ENCODE measurements at regions of chr21 and their contacts with region 1.

Region 1: GRCh38 chr21:16082038-16082816 is 352.4 kb downstream of the USP25 start:
- DNase-seq: peak; percentile 17
- H3K4me3 Mint-ChIP-seq: no peak overlapping the region
- H3K27ac Mint-ChIP-seq: no peak overlapping the region
- H3K4me1 Mint-ChIP-seq: peaks cover 7% of the 10 kb centered on the region
- H3K27me3 Mint-ChIP-seq: peaks cover 11% of the 10 kb centered on the region
- CTCF ChIP-seq: peak; percentile 29

Region 2: DNA sequence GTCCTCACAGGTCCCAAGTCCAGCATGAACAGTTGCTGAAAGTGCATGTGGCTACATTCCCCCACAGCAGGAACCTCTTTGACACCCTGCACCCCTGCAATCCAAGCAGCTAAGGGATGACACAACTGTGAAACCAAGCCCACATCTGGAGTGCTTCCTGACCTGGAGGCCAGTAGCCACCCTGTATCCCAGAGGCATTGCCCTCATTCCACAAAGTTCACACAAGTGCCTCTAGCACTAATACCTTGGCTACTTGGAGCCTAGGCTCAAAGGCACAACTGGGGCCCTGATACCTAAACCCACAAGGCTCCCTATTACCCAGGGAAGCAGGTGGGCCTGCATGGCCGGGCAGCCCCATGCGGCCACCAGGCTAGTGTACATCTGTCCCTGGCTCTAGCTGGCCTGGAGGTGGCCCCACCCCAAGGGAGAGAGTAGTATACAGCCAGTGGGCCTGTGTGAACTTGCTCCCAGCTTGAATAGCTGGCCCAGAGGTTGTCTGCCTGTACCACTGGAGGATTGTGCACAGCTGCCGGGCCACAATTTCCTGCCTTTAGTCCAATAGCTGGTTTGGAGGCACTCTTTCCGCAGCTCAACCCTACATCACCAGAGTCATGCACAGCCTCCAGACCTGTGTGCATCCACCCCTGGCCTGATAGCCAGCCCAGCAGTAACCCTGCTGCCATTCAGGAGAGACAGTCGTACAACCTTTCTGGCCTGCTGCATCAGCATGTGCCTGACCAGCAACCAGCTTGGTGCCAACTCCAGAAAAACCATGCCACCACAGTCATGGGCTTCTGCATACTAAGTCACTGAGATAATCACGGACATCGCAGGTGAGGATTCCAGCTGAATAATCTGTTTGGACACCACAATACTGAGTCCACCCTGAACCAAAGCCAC is 300.2 kb before region 1 on chr21:
- CTCF ChIA-PET with region 1: no interaction called
- POLR2A ChIA-PET with region 1: no interaction called
- intact Hi-C with region 1: no loop called
- DNase-seq: no peak
- H3K4me3 Mint-ChIP-seq: no peak overlapping the region
- H3K27ac Mint-ChIP-seq: no peak overlapping the region
- H3K4me1 Mint-ChIP-seq: peaks cover 12% of the 10 kb centered on the region
- H3K27me3 Mint-ChIP-seq: no peaks in the 10 kb centered on the region
- CTCF ChIP-seq: no peak

Region 3: GRCh38 chr21:16096988-16097387 is 14.8 kb after region 1 on chr21:
- CTCF ChIA-PET with region 1: interaction called, 19 read pairs
- POLR2A ChIA-PET with region 1: no interaction called
- intact Hi-C with region 1: no loop called
- DNase-seq: no peak
- H3K4me3 Mint-ChIP-seq: no peak overlapping the region
- H3K27ac Mint-ChIP-seq: no peak overlapping the region
- H3K4me1 Mint-ChIP-seq: no peaks in the 10 kb centered on the region
- H3K27me3 Mint-ChIP-seq: peaks cover 42% of the 10 kb centered on the region
- CTCF ChIP-seq: no peak

Region 4: DNA sequence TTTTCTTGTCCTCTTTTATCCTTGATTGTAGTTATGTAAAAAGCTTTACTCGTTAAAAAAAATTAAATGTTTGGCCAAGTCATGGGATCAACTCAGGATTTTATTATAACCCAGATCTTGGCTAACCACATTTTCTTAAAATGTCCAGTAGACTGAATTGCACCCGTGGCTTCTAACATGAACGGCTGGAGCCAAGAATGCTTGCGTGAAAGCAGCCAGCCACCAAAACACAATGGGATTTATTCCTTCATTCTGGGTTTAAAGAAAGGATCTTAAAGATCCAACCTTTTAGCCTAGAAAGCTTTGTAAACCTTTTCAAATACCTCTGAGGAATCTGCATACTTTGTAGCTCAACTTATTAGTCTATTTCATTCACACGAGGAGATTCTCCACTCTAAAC is 51.9 kb after region 1 on chr21:
- CTCF ChIA-PET with region 1: no interaction called
- POLR2A ChIA-PET with region 1: no interaction called
- intact Hi-C with region 1: no loop called
- DNase-seq: no peak
- H3K4me3 Mint-ChIP-seq: no peak overlapping the region
- H3K27ac Mint-ChIP-seq: no peak overlapping the region
- H3K4me1 Mint-ChIP-seq: no peaks in the 10 kb centered on the region
- H3K27me3 Mint-ChIP-seq: peaks cover 33% of the 10 kb centered on the region
- CTCF ChIP-seq: no peak

Region 5: DNA sequence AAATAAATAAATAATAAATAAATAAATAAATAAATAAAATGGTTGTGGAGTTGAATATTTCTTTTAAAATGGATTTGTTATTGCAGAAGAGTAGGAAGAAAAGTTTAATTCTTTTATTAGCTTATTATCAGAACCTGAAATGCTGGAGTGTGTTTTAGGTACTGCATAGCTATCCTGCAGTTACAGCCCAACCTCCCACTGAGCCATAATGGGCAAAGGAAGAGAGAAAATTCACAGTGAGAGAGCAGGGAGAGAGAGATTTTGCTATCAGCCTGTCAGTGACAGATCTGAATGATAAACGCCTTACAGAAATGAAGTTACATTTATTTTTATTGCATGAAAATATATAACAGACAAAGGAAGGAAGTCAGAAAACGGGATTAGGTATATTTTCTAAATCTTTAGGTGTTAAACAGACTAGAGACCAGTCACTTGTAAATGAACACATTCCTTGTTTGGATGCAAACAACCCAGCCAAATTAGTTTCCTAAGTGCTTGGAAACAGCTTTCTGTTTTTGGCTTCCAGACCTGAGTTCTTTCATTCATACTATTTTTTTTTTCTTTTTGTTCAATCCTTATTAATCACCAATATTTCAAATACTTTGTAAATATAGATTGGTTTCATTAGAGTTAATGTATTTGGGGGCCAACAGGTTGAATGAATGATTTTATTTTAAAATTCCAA is 72.9 kb after region 1 on chr21:
- CTCF ChIA-PET with region 1: no interaction called
- POLR2A ChIA-PET with region 1: no interaction called
- intact Hi-C with region 1: no loop called
- DNase-seq: no peak
- H3K4me3 Mint-ChIP-seq: no peak overlapping the region
- H3K27ac Mint-ChIP-seq: no peak overlapping the region
- H3K4me1 Mint-ChIP-seq: no peaks in the 10 kb centered on the region
- H3K27me3 Mint-ChIP-seq: no peaks in the 10 kb centered on the region
- CTCF ChIP-seq: no peak

Region 6: GRCh38 chr21:16588433-16588860 is 506.2 kb after region 1 on chr21:
- CTCF ChIA-PET with region 1: no interaction called
- POLR2A ChIA-PET with region 1: no interaction called
- intact Hi-C with region 1: no loop called
- DNase-seq: peak; percentile 79
- H3K4me3 Mint-ChIP-seq: no peak overlapping the region
- H3K27ac Mint-ChIP-seq: no peak overlapping the region
- H3K4me1 Mint-ChIP-seq: peaks cover 4% of the 10 kb centered on the region
- H3K27me3 Mint-ChIP-seq: no peaks in the 10 kb centered on the region
- CTCF ChIP-seq: no peak

Region 7: GRCh38 chr21:16608209-16608830 is 526.1 kb after region 1 on chr21:
- CTCF ChIA-PET with region 1: interaction called, 9 read pairs
- POLR2A ChIA-PET with region 1: no interaction called
- intact Hi-C with region 1: loop called (anchors 10 kb)
- DNase-seq: peak; percentile 47
- H3K4me3 Mint-ChIP-seq: no peak overlapping the region
- H3K27ac Mint-ChIP-seq: no peak overlapping the region
- H3K4me1 Mint-ChIP-seq: no peaks in the 10 kb centered on the region
- H3K27me3 Mint-ChIP-seq: no peaks in the 10 kb centered on the region
- CTCF ChIP-seq: peak; percentile 52